ENCODE measurements at regions of chr1 and their contacts with region 1.

Region 1: DNA sequence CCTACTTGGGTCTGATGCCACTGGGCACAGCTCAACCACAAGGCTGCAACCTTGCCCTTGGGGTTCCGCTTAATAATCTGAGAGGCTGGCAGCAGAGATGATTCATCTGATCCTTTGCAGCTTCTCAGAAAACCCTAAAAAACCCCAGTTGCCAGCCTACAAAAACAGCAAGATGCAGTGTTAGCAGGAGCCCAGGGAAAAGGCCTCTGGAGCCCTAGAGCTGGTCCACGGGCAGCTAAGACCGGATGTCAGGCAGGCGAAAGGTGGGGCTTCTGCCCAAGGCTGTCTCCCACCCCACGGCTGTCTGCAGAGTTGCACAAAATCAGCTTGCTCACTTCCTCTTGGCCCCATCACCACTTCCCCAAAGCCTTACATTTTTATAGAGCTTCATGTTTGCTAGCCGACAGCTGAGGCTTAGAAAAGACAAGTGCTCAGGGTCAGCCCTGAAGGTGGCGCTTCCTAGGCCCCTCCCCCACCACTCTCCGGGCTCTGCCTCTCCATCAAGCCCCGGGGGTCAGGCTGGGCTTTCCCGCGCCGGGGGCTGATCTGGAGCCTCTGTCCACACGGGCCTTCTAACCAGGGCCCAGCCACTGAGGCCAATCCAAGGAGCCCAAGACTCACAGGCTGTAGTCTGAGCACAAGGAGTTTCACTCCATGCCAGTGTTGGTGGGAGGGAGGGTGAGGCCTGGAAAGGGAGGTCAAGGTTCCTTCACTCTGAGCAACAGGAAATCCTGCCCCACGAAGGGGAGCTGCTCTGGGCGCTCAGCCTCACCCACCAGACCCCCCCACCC is 4.2 kb upstream of the ADORA3 start:
- DNase-seq: peak; percentile 64
- H3K4me3 ChIP-seq: peak overlapping the region in 1 of 3 experiments; percentile 4
- H3K27ac ChIP-seq: peak overlapping the region; percentile 86
- H3K4me1 ChIP-seq: peaks cover 15% of the 10 kb centered on the region
- H3K27me3 ChIP-seq: peaks cover 0 to 2% of the 10 kb centered on the region in 2 experiments
- CTCF ChIP-seq: peak in 1 of 2 donors; percentile 17
- POLR2A ChIP-seq: no peak

Region 2: GRCh38 chr1:111481387-111482221 is 26.0 kb before region 1 on chr1:
- CTCF ChIA-PET with region 1: interaction called, 64 read pairs
- POLR2A ChIA-PET with region 1: no interaction called
- dilution Hi-C with region 1: no loop called
- intact Hi-C with region 1: no loop called
- DNase-seq: peak; percentile 62
- H3K4me3 ChIP-seq: no peak overlapping the region
- H3K27ac ChIP-seq: no peak overlapping the region
- H3K4me1 ChIP-seq: no peaks in the 10 kb centered on the region
- H3K27me3 ChIP-seq: peaks cover 0 to 2% of the 10 kb centered on the region in 2 experiments
- CTCF ChIP-seq: peak; percentile 57 to 70
- POLR2A ChIP-seq: no peak

Region 3: GRCh38 chr1:111592389-111593361 is 85.1 kb after region 1 on chr1:
- CTCF ChIA-PET with region 1: interaction called, 12 read pairs
- POLR2A ChIA-PET with region 1: interaction called, 4 read pairs
- dilution Hi-C with region 1: no loop called
- intact Hi-C with region 1: loop called (anchors 2 kb)
- DNase-seq: peak; percentile 95
- H3K4me3 ChIP-seq: no peak overlapping the region
- H3K27ac ChIP-seq: peak overlapping the region; percentile 16
- H3K4me1 ChIP-seq: peaks cover 15% of the 10 kb centered on the region
- H3K27me3 ChIP-seq: peaks cover 2 to 6% of the 10 kb centered on the region in 2 experiments
- CTCF ChIP-seq: no peak
- POLR2A ChIP-seq: no peak

Region 4: DNA sequence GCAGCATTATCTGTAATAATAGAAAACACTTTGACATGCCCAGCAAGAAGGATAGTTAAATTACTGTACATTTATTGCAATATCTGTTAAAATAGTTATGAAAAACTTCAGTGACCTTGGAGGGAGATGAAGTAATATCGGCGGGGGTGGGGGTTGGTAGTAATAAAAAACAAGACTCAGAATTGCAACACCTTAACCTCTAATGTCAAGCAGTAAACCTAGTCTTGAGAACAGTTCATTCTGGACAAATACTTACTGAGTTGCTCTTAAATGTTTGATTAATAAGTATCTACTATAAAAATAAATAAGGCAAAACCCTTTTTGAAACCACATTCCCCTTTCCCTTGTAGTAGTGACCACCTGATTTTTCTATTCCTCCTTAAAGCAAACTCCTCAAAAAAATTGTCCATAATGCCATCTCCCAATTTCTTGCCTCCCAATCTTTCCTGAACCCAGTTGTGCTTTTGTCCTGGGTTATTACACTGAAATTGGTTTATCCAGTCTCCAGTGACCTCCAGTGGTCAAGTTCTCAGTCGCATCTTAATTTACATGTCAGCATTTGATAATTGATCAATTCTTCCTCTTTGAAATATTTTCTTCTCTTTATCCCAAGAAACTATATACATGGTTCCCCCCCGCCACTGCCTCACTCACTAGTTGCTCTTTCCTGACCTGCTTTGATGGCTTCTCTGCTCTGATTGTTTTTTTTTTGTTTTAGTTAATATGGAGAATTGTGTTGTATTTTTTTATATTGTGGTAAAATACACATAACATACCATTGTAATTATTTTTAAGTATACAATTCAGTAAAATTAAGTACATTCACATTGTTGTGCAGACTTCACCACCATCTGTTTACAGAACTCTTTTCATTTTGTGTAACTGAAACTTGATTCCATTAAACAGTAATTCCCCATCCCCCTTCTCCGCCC is 148.7 kb after region 1 on chr1:
- CTCF ChIA-PET with region 1: interaction called, 20 read pairs
- POLR2A ChIA-PET with region 1: no interaction called
- dilution Hi-C with region 1: no loop called
- intact Hi-C with region 1: loop called (anchors 1 kb)
- DNase-seq: peak; percentile 67
- H3K4me3 ChIP-seq: no peak overlapping the region
- H3K27ac ChIP-seq: no peak overlapping the region
- H3K4me1 ChIP-seq: no peaks in the 10 kb centered on the region
- H3K27me3 ChIP-seq: no peaks in the 10 kb centered on the region
- CTCF ChIP-seq: peak; percentile 16 to 35
- POLR2A ChIP-seq: no peak

Region 5: DNA sequence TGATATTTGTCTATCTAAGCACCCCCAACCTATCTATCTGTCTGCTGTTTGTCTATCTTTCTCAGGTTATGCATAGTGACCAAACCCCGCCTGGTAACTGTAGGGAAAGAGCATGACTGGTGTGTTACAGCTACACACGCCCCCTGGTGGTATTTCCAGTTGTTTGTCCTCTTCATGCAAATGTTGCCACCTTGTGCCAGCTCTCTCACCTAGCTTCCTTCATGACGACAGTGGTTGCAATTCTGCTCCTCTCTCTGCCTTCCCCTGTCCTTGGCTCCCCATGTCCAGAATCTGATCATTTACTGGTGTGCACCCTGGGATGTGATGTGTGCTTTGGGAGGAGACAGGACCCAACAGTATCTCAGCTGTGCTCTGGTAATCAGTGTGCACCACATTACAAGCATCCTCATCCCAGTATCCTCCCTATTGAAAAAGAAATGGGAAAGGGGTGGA is 239.7 kb after region 1 on chr1:
- CTCF ChIA-PET with region 1: interaction called, 30 read pairs
- POLR2A ChIA-PET with region 1: interaction called, 3 read pairs
- dilution Hi-C with region 1: no loop called
- intact Hi-C with region 1: loop called (anchors 1 kb)
- DNase-seq: peak; percentile 71
- H3K4me3 ChIP-seq: no peak overlapping the region
- H3K27ac ChIP-seq: no peak overlapping the region
- H3K4me1 ChIP-seq: peaks cover 2% of the 10 kb centered on the region
- H3K27me3 ChIP-seq: no peaks in the 10 kb centered on the region
- CTCF ChIP-seq: peak; percentile 82 to 89
- POLR2A ChIP-seq: no peak

Region 6: DNA sequence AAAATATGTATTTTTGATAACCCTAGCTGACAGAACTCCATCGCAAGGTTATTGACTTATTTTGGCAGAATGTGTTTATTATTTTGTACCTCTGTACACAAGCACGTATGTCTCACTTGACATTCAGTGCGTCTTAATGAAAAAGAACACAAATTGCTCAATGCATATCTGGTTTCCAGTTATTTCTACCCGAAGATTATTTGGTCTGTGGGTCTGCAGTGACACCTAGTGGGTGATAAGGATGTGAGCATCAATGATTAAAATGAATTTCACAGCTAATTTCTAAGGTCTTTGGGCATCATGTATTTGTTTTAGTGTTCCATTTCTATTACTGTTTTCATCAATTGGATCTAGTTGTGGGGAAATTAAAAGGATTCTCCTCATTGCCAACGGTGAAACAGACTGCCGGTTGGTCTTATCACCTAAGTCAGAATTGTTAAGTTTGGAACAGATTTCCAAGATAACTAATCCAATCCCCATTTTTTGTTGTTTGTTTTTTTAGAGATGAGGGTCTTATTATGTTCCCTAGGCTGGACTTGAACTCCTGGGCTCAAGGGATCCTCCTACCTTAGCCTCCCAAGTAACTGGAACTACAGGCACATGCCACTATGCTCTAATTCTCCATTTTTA is 262.0 kb after region 1 on chr1:
- CTCF ChIA-PET with region 1: interaction called, 62 read pairs
- POLR2A ChIA-PET with region 1: no interaction called
- dilution Hi-C with region 1: no loop called
- intact Hi-C with region 1: loop called (anchors 1 kb)
- DNase-seq: peak; percentile 70
- H3K4me3 ChIP-seq: no peak overlapping the region
- H3K27ac ChIP-seq: no peak overlapping the region
- H3K4me1 ChIP-seq: no peaks in the 10 kb centered on the region
- H3K27me3 ChIP-seq: no peaks in the 10 kb centered on the region
- CTCF ChIP-seq: peak; percentile 51 to 62
- POLR2A ChIP-seq: peak; percentile 18

Region 7: DNA sequence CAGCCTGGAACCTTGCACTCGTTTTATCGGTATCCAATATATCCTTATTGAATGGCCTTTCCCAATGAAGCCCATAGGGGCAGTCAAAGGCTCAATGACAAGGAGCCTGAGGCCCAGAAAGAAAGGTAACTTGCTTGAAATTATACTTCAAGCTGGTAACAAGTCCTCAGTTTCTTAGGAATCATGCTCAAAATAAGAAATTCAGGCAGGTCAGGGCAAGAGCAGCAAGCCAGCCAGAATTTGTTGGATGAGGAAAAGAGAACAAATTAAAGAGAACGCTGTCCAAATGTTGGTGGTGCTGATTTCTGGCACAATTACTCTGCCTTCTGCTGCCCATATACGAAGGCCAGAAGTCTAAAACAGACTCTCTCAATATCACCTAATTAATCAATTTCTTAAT is 325.7 kb after region 1 on chr1:
- CTCF ChIA-PET with region 1: no interaction called
- POLR2A ChIA-PET with region 1: no interaction called
- dilution Hi-C with region 1: no loop called
- intact Hi-C with region 1: no loop called
- DNase-seq: no peak
- H3K4me3 ChIP-seq: no peak overlapping the region
- H3K27ac ChIP-seq: no peak overlapping the region
- H3K4me1 ChIP-seq: no peaks in the 10 kb centered on the region
- H3K27me3 ChIP-seq: no peaks in the 10 kb centered on the region
- CTCF ChIP-seq: no peak
- POLR2A ChIP-seq: no peak

Region 8: DNA sequence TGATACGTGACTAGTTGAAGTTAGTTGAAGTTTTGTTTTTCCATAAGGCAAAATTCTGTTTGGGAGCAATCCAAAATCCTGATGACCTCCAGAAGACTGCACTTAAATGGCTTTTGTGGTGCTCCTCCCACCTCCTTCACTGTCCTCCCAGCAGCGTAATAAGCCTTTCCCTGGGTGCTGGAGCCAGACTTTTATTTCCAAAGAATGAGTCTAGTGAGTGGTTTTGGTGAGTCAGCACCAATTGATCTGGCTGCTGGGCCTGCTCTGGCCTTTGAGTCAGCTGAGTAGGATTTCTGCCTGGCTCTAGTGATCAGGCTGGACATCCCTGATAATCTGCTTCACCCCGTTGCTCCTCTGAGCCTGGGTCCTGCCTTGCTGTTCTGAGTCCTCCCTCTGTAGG is 503.6 kb after region 1 on chr1:
- CTCF ChIA-PET with region 1: no interaction called
- POLR2A ChIA-PET with region 1: no interaction called
- dilution Hi-C with region 1: no loop called
- intact Hi-C with region 1: no loop called
- DNase-seq: no peak
- H3K4me3 ChIP-seq: no peak overlapping the region
- H3K27ac ChIP-seq: no peak overlapping the region
- H3K4me1 ChIP-seq: no peaks in the 10 kb centered on the region
- H3K27me3 ChIP-seq: no peaks in the 10 kb centered on the region
- CTCF ChIP-seq: no peak
- POLR2A ChIP-seq: no peak